ENCODE measurements at regions of chr21 and their contacts with region 1.

Region 1: DNA sequence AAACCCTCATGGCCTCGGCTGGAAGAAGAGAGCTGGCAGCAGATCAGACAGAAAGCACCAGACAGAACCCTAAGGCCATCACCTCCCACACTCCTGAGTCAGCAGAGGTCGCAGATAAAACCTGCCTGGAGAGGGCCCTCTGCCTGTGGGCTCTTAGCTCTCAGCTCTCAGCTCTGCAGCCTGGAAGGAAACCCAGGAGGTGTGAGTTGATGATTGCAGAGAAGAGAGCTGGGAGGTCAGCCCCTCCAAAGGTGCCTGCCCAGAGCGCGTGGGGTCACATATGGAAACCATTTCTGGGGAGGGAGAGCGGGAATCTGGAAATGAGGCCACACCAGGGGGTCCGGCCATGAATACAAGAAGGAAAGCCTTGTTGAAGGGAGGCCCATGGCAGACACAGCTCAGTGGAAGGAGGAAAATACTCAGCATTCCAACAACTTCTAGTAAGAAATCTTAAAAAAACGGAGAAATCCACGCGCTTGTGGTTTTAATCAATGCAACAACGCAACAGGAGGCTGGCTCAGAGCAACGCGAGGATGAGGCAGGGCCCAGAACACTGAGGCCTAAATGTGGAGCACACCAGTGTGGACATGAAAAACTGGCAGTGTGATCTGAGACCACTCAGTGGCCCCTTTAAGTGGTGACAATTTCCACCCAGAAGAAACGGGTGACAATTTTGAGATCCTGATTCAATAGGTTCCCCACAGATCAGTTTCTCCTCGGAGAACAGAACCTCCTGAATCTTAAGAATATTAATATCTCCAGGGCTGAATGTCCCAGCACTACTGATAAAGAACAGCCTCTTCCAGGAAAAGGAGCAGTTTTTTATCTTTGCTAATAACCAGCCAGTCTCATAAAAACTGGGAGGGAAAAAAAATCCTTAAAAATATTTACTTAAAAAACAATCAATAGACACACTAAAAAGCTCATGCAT is 45.7 kb downstream of the PSMG1 start:
- DNase-seq: peak; percentile 51
- H3K4me3 ChIP-seq: no peak overlapping the region
- H3K27ac ChIP-seq: no peak overlapping the region
- H3K4me1 ChIP-seq: peaks cover 14% of the 10 kb centered on the region
- H3K27me3 ChIP-seq: no peaks in the 10 kb centered on the region
- CTCF ChIP-seq: peak; percentile 10 to 44

Region 2: GRCh38 chr21:38159355-38159754 is 978.2 kb before region 1 on chr21:
- CTCF ChIA-PET with region 1: no interaction called
- dilution Hi-C with region 1: no loop called
- in situ Hi-C with region 1: no loop called
- intact Hi-C with region 1: loop called (anchors 10 kb)
- DNase-seq: peak; percentile 52
- H3K4me3 ChIP-seq: no peak overlapping the region
- H3K27ac ChIP-seq: no peak overlapping the region
- H3K4me1 ChIP-seq: no peaks in the 10 kb centered on the region
- H3K27me3 ChIP-seq: no peaks in the 10 kb centered on the region
- CTCF ChIP-seq: peak; percentile 67 to 83

Region 3: GRCh38 chr21:39094847-39095579 is 42.5 kb before region 1 on chr21:
- CTCF ChIA-PET with region 1: no interaction called
- dilution Hi-C with region 1: no loop called
- in situ Hi-C with region 1: no loop called
- intact Hi-C with region 1: no loop called
- DNase-seq: no peak
- H3K4me3 ChIP-seq: no peak overlapping the region
- H3K27ac ChIP-seq: no peak overlapping the region
- H3K4me1 ChIP-seq: no peaks in the 10 kb centered on the region
- H3K27me3 ChIP-seq: no peaks in the 10 kb centered on the region
- CTCF ChIP-seq: no peak

Measured in mammary epithelial cell (primary cell).